Right ventricle myocardium inferior (tissue), 1 donor: ENCODE measurements at regions of chr3 and their contacts with region 1.

Region 1: DNA sequence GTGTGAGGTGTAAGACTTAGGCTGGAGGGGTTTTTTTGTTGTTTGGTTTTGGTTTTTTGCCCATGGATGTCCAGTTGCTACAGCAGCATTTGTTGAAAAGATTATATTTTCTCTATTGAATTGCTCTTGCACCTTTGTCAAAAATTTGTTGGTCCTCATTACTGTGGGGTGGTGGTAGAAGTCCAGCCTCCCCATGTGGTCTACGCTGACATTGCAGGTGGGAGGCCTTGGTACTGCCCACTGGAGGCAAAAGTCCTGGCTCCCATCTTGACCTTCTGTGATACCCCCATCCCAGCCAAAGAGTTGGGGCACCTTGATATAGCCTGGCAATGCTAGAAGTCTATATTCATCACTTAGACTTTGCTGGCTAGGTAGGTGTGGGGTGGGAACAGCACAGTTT is 5.4 kb upstream of the RAB6B start:
- DNase-seq: no peak
- ATAC-seq: no peak

Region 2: DNA sequence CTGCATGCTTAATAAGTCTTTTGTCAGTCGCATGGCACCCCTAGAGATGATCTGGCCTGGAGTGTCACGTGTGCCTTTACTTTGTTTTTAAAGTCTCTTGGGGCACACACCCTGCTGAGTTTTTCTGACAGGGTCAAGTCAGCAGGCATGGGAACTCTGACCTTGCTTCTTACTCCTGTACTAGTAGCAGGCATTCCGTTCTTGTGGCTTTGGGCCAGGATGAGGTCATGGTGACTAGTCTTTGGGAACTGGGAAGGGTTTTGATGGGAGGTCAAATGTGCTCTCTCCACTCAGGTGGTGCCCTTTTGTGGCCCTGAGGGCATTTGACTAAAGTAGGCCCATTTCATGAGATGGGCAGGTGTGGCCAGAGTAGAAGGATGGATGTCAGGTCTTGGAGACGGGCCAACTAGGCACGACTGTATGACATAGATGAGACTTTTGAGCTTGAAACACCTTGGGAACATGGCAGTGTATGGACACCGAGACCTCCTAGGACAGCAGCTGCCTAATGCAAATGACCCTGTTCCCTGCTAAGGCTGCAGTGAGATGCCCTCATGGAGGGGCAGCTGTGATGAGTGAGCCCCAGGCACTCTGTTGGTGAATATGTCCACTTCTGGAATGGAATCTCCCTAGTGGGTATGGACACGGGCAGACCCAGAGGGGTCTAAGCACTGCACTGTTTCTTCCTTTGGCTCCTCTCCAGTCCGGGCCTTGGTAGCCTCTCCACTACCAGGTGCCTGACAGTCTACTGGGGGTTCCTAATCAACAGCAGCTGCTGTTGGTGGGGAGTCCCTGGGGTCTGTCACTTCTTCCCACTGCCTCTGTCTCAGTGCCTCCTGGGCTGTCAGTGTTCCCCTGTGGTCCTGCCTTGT is 79.1 kb before region 1 on chr3:
- intact Hi-C with region 1: loop called (anchors 2 kb)
- DNase-seq: no peak
- ATAC-seq: peak; percentile 65

Region 3: DNA sequence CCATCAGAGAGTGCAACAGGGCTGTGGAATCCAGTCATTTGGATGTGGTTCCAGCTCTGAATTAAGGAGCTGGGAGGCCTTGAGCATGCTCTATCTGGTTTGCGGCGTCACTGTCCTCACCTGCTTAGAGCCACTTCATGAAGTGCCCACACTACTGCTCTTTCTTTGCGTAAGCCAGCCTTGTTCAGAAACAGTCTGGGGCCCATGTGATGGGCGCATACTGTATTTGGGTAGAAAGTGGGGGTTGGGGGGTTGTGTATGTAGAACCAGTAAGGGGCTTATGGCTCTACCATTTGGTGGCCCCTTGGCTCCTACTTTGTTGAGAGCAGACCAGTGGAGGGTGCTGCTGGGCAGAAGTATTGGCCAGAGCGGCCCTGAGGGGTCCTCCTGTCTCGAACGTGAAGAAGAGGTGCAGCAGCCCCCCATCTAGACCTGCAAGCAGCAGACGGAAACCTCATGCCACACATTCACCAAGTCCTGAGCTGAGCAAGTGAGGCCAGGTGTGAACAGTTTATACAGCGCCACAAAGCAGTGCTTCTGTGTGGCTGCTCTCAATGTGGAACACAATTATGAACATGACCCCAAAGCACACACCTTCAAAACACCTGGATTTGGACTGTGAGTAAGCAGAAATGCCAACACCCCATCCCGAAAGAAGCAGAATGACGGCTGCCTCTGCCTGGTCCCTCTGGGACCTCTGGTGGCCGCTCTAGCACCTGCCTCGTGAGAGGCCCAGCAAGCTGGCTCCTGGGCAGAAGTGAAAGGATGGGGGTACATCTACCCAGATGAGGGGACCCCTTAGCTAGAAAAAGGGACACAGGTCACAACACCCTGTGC is 68.9 kb before region 1 on chr3:
- intact Hi-C with region 1: no loop called
- DNase-seq: no peak
- ATAC-seq: no peak

Region 4: GRCh38 chr3:134134240-134134639 is 233.2 kb after region 1 on chr3:
- intact Hi-C with region 1: no loop called
- DNase-seq: no peak
- ATAC-seq: no peak